Activated CD4-positive, alpha-beta T cell treated with anti-CD3 and anti-CD28 coated beads, Interleukin-2, amount 10 ng/mL, durations not matched to agents 7 days and 5 days (primary cell): ENCODE measurements at regions of chr1 and their contacts with region 1.

Region 1: GRCh38 chr1:198681831-198682759 is 43.3 kb downstream of the PTPRC start:
- DNase-seq: peak; percentile 94
- H3K4me3 Mint-ChIP-seq: peak overlapping the region; percentile 73
- H3K27ac Mint-ChIP-seq: peak overlapping the region; percentile 95
- H3K4me1 Mint-ChIP-seq: peaks cover 87% of the 10 kb centered on the region
- H3K27me3 Mint-ChIP-seq: no peaks in the 10 kb centered on the region

Region 2: GRCh38 chr1:198520524-198521254 is 161.4 kb before region 1 on chr1:
- CTCF ChIA-PET with region 1: interaction called, 10 read pairs
- POLR2A ChIA-PET with region 1: interaction called, 6 read pairs
- DNase-seq: peak; percentile 31
- H3K4me3 Mint-ChIP-seq: peak overlapping the region; percentile 65
- H3K27ac Mint-ChIP-seq: peak overlapping the region; percentile 83
- H3K4me1 Mint-ChIP-seq: peaks cover 63% of the 10 kb centered on the region
- H3K27me3 Mint-ChIP-seq: no peaks in the 10 kb centered on the region

Region 3: DNA sequence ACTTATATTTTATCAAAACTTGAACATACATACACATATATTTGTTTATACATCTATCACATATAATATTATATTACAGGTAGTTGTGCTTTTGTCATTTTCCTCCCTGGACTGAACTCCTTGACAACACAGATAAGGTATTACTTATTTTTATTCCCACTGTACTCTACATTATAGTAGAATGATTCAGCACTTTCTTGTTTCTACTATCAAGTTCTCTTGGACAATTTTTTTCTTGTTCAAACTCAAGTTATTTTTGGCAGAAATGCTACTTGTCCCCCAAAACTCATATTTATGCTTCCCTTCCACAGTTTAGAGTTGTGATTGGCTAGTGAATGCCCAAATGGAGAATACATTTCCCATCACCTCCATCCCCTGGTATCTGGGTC is 54.0 kb before region 1 on chr1:
- CTCF ChIA-PET with region 1: no interaction called
- POLR2A ChIA-PET with region 1: no interaction called
- DNase-seq: no peak
- H3K4me3 Mint-ChIP-seq: peak overlapping the region; percentile 59
- H3K27ac Mint-ChIP-seq: peak overlapping the region; percentile 91
- H3K4me1 Mint-ChIP-seq: peaks cover 91% of the 10 kb centered on the region
- H3K27me3 Mint-ChIP-seq: no peaks in the 10 kb centered on the region

Region 4: DNA sequence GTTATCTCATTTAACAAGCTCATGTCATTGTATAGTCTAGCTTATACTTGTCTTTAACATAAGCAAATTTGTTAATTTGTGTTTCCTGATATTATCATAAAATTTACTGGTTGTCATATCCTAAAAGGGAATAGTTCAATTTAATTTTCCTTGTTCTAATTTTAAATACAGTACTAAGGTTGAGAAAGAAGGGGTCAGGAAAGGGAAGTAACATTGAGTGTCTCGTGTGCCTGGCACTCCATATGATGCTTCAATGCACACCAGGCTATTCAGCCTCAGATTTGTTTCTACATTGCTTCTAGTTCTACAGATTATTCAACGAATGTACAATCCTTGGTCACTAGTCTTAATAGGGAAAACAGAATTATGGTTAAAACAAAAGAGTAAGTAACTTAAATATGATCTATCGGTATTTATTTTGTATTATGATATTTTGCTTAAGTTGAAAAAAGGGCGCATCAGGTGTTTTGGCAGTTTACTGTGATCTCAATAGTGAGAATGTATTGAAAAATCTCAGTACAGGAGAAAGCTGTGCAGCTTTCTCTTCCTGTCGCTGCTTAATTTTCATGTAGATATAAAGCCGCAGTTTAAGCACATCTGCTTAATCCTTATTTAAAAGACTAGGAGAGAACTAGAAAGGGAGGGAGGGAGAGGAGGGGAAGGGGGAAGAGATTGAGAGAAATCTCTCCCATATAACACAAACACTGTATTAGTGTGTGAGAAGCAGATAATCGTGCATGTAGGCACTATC is 30.3 kb before region 1 on chr1:
- CTCF ChIA-PET with region 1: interaction called, 9 read pairs
- POLR2A ChIA-PET with region 1: interaction called, 12 read pairs
- DNase-seq: no peak
- H3K4me3 Mint-ChIP-seq: peak overlapping the region; percentile 71
- H3K27ac Mint-ChIP-seq: peak overlapping the region; percentile 85
- H3K4me1 Mint-ChIP-seq: peaks cover 73% of the 10 kb centered on the region
- H3K27me3 Mint-ChIP-seq: no peaks in the 10 kb centered on the region

Region 5: DNA sequence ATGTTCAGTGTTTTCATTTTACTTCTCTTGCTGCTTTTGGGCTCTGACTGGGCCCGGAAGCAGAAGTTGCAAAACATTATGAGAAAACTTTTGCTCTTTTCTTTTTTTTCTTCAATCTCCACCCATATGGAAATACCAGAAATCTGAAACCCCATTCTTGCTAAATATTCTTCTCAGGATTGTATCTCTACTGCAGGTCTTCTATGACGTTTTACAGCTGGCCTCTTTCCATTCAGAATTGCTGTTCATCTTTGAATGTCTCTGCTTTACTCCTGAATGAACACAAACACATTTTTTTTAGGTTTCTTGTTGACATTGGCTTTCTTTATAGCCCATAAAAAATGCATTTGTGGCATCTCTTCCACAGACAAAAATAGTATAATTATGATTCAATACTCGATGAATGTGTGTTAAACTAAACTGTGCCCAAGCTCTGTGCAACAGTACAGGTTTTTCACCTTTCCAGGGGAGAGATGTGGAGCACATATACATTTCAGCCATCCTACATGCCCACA is 24.5 kb before region 1 on chr1:
- CTCF ChIA-PET with region 1: interaction called, 5 read pairs
- POLR2A ChIA-PET with region 1: interaction called, 10 read pairs
- DNase-seq: no peak
- H3K4me3 Mint-ChIP-seq: peak overlapping the region; percentile 76
- H3K27ac Mint-ChIP-seq: peak overlapping the region; percentile 81
- H3K4me1 Mint-ChIP-seq: peaks cover 65% of the 10 kb centered on the region
- H3K27me3 Mint-ChIP-seq: no peaks in the 10 kb centered on the region

Region 6: DNA sequence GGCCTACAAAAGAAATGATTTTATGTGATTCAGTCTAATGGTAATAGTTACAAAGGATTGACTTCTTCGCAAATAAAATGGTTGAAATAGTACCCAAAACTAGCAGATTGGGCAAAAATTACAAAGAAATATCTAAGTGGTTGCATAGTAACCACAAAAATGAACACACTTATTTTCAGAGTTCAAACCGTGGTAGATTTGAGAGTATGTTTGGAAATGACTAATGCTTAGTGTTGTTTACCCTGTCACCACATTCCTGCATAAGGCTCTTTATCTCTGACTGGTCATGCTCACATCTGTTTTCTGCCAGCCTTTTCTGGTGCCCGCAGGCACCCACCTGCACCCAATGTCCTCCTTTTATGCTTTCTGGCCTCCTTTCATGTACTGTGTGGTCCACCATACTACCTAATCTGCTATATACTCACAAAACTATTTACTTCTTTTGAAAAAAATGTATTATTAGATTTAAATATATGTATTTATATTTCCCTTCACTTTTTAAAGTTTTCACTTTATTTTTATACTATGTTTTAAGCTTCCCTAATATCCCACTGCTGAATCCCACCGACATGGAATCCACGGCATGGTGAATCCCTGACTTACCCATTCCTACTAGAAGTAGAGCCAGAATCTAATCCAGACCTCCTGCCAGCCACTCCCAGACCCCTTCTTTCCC is 12.9 kb before region 1 on chr1:
- CTCF ChIA-PET with region 1: interaction called, 49 read pairs
- POLR2A ChIA-PET with region 1: no interaction called
- DNase-seq: peak; percentile 57
- H3K4me3 Mint-ChIP-seq: peak overlapping the region; percentile 43
- H3K27ac Mint-ChIP-seq: peak overlapping the region; percentile 93
- H3K4me1 Mint-ChIP-seq: peaks cover 84% of the 10 kb centered on the region
- H3K27me3 Mint-ChIP-seq: no peaks in the 10 kb centered on the region

Region 7: DNA sequence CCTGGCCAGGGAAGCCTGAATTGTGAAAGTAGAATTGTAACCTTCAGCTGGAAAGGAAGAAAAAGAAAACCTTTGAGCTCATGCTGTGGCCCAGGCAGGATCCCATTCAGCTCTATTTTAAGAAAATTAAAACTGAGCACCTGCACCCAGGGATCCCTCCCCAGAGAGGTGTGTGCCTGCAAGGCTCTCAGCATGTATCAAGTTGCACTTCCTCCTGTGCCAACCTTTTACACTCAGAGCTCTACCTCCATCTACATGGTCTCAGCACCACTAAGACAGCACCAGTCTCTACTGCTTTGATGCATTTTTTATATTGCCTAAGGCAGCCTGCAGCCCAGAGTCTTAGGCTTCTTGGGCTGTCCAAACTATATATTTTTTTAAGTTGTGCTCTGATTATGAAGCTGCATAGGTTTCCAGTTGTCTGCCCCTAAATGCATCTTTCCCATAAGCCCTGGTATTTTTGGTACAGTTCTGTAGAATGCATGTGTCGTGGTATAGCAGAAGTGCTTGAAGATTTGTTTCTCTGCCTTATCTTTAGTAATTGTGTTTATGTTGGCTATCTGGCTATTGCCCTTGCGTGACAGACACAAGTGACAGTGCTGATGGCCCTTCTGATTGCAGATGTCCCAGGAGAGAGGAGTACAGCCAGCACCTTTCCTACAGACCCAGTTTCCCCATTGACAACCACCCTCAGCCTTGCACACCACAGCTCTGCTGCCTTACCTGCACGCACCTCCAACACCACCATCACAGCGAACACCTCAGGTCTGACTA is 19.9 kb after region 1 on chr1:
- CTCF ChIA-PET with region 1: interaction called, 10 read pairs
- POLR2A ChIA-PET with region 1: no interaction called
- DNase-seq: no peak
- H3K4me3 Mint-ChIP-seq: no peak overlapping the region
- H3K27ac Mint-ChIP-seq: no peak overlapping the region
- H3K4me1 Mint-ChIP-seq: peaks cover 74% of the 10 kb centered on the region
- H3K27me3 Mint-ChIP-seq: no peaks in the 10 kb centered on the region

Region 8: GRCh38 chr1:198730952-198731351 is 48.9 kb after region 1 on chr1:
- CTCF ChIA-PET with region 1: no interaction called
- POLR2A ChIA-PET with region 1: no interaction called
- DNase-seq: no peak
- H3K4me3 Mint-ChIP-seq: no peak overlapping the region
- H3K27ac Mint-ChIP-seq: no peak overlapping the region
- H3K4me1 Mint-ChIP-seq: peaks cover 42% of the 10 kb centered on the region
- H3K27me3 Mint-ChIP-seq: no peaks in the 10 kb centered on the region

Region 9: DNA sequence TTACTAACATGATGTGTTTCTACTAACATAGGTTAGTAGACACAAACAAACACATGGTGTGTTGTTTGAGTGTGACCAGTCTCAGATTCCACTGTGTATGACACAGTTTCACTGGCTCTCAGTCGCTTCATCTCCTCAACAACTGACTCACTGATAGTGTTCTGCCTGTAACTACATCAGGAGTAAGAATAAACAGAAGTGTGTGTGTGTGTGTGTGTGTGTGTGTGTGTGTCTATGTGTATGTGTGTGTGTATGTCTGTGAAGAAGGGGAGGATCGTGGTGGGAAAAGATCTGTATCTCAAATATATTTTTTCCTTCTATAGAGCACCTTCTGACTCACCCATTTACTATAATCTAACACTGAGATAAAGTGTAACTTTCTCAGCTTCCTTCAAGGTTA is 347.8 kb after region 1 on chr1:
- CTCF ChIA-PET with region 1: no interaction called
- POLR2A ChIA-PET with region 1: no interaction called
- DNase-seq: no peak
- H3K4me3 Mint-ChIP-seq: no peak overlapping the region
- H3K27ac Mint-ChIP-seq: no peak overlapping the region
- H3K4me1 Mint-ChIP-seq: peaks cover 42% of the 10 kb centered on the region
- H3K27me3 Mint-ChIP-seq: no peaks in the 10 kb centered on the region